CD4-positive, alpha-beta T cell (primary cell): ENCODE measurements at regions of chrX and their contacts with region 1.

Region 1: GRCh38 chrX:133698298-133698697 is 283.0 kb upstream of the GPC4 start:
- DNase-seq: peak in 3 of 14 experiments; percentile 1 to 14 (median 8)
- ATAC-seq: no peak
- H3K4me3 ChIP-seq: no peak overlapping the region
- H3K4me3 Mint-ChIP-seq: no peak overlapping the region
- H3K27ac ChIP-seq: no peak overlapping the region
- H3K27ac Mint-ChIP-seq: no peak overlapping the region
- H3K4me1 ChIP-seq: no peaks in the 10 kb centered on the region
- H3K4me1 Mint-ChIP-seq: no peaks in the 10 kb centered on the region
- H3K27me3 ChIP-seq: no peaks in the 10 kb centered on the region
- H3K27me3 Mint-ChIP-seq: no peaks in the 10 kb centered on the region
- CTCF ChIP-seq: no peak

Region 2: GRCh38 chrX:134396174-134396573 is 697.9 kb after region 1 on chrX:
- CTCF ChIA-PET with region 1: no interaction called
- POLR2A ChIA-PET with region 1: no interaction called
- intact Hi-C with region 1: loop called in 1 of 2 experiments (anchors 2 kb)
- DNase-seq: peak in 2 of 14 experiments; percentile 23 to 29
- ATAC-seq: no peak
- H3K4me3 ChIP-seq: no peak overlapping the region
- H3K4me3 Mint-ChIP-seq: no peak overlapping the region
- H3K27ac ChIP-seq: no peak overlapping the region
- H3K27ac Mint-ChIP-seq: no peak overlapping the region
- H3K4me1 ChIP-seq: no peaks in the 10 kb centered on the region
- H3K4me1 Mint-ChIP-seq: no peaks in the 10 kb centered on the region
- H3K27me3 ChIP-seq: no peaks in the 10 kb centered on the region
- H3K27me3 Mint-ChIP-seq: no peaks in the 10 kb centered on the region
- CTCF ChIP-seq: peak; percentile 64